Activated T-helper 1 cell treated with anti-CD3 and anti-CD28 coated beads, Interleukin-12 subunit alpha, Interleukin-12 subunit beta, Interleukin-2, Interleukin-4 antibody, amounts not matched to agents 30 ng/mL and 10 ng/mL and 1 ng/mL, durations not matched to agents 14 hours and 24 hours and 36 hours (primary cell): ENCODE measurements at regions of chr11 and their contacts with region 1.

Region 1: GRCh38 chr11:615504-616319 is at the start of gene IRF7:
- DNase-seq: peak; percentile 88
- H3K4me3 Mint-ChIP-seq: peak within 1 kb of the TSS; percentile 86
- H3K27ac Mint-ChIP-seq: peak within 1 kb of the TSS; percentile 85
- H3K4me1 Mint-ChIP-seq: peaks cover 7% of the 10 kb centered on the region
- H3K27me3 Mint-ChIP-seq: no peaks in the 10 kb centered on the region
- total RNA-seq, gene IRF7: 56.6 and 63.1 TPM in 2 replicates

Region 2: GRCh38 chr11:236774-237767 is 378.6 kb before region 1 on chr11 and contains the start of gene PSMD13:
- intact Hi-C with region 1: no loop called
- DNase-seq: peak; percentile 84
- H3K4me3 Mint-ChIP-seq: peak within 1 kb of the TSS; percentile 97
- H3K27ac Mint-ChIP-seq: peak within 1 kb of the TSS; percentile 98
- H3K4me1 Mint-ChIP-seq: peaks cover 46% of the 10 kb centered on the region
- H3K27me3 Mint-ChIP-seq: peaks cover 2% of the 10 kb centered on the region
- total RNA-seq, gene PSMD13: 261 and 266 TPM in 2 replicates

Region 3: DNA sequence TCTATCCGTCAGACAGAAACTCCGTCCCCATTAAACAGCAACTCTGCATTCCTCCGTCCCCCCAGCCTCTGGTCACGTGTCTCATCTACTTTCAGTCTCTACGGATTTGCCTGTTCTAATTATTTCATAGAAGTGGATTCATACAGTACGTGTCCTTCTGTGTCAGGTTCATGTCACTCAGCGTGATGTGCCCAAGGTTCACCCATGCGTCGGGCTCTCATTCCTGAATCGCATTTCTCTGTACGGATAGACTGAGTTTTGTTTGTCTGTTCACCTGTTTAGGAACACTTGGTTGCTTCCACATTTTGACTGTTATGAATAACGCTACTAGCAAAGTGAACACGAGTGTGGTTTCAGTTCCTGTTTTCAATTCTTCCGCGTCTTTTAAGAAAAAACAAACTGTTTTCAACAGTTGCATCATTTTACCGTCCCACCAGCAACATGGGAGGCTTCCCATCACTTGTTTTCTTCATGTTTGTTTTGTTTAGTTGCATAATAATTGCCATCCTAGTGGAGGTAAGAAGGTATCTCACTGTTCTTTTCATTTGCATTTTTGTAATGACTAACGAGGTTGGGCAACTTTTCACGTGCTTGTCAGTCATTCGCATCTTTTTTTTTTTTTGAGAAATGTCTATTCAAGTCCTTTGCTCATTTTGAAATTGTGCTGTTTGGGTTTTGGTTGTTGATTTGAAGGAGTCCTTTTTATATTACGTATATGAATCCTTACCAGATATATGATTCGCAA is 346.4 kb before region 1 on chr11:
- intact Hi-C with region 1: no loop called
- DNase-seq: peak; percentile 53
- H3K4me3 Mint-ChIP-seq: peak overlapping the region; percentile 88
- H3K27ac Mint-ChIP-seq: peak overlapping the region; percentile 97
- H3K4me1 Mint-ChIP-seq: peaks cover 31% of the 10 kb centered on the region
- H3K27me3 Mint-ChIP-seq: peaks cover 6% of the 10 kb centered on the region

Region 4: GRCh38 chr11:560305-561147 is 55.2 kb before region 1 on chr11 and contains the starts of genes LMNTD2 and RASSF7:
- intact Hi-C with region 1: loop called (anchors 1 kb)
- DNase-seq: peak; percentile 94
- H3K4me3 Mint-ChIP-seq: peak within 1 kb of the TSS; percentile 95
- H3K27ac Mint-ChIP-seq: peak within 1 kb of the TSS; percentile 71
- H3K4me1 Mint-ChIP-seq: peaks cover 11% of the 10 kb centered on the region
- H3K27me3 Mint-ChIP-seq: peaks cover 10% of the 10 kb centered on the region
- total RNA-seq, gene LMNTD2: 0.47 and 0.64 TPM in 2 replicates
- total RNA-seq, gene RASSF7: 15.9 and 19.8 TPM in 2 replicates

Region 5: DNA sequence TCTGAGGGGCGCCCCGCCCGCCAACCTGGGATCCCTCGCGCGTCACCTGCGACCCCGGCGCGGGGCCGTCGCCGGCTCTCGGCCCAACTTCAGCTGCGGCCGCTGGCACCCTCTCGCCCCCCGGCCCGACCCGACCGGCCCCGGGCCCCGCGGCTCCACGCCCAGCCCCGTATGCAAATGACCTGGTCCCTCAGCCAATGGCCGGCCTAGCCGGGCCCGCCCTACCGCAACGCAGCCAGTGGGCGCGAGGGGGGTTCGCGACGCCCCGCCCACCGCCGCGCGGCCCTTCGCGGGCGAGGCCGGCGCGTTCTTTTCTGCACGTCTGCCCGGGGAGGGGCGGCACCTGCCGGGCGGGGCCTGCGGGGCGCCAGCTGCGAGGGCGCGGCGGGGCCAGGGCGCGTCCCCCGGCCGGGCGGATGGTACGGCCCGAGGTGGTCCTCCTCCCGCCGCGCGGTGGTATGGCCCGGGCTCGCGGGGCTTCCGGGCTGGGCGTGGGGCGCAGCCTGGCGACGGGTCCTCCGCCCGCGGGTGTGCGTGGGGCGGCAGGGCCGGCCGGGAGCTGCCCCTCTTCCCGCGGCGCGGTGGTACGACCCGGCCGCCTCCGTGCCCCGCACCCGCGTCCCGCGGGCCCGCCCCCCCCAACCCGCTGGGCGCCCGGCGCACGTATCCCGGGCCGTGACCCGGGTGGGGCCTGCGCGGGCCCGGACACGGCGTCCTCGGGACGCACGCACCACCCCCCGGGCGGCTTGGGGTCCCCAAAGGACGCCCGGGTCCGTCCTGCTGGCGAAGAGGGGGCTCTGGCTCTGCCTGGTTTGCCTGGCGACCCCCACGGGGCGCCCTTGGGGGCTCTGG is 47.2 kb before region 1 on chr11:
- intact Hi-C with region 1: loop called (anchors 2 kb)
- DNase-seq: peak; percentile 97
- H3K4me3 Mint-ChIP-seq: peak overlapping the region; percentile 79
- H3K27ac Mint-ChIP-seq: no peak overlapping the region
- H3K4me1 Mint-ChIP-seq: peaks cover 15% of the 10 kb centered on the region
- H3K27me3 Mint-ChIP-seq: peaks cover 2% of the 10 kb centered on the region

Region 6: DNA sequence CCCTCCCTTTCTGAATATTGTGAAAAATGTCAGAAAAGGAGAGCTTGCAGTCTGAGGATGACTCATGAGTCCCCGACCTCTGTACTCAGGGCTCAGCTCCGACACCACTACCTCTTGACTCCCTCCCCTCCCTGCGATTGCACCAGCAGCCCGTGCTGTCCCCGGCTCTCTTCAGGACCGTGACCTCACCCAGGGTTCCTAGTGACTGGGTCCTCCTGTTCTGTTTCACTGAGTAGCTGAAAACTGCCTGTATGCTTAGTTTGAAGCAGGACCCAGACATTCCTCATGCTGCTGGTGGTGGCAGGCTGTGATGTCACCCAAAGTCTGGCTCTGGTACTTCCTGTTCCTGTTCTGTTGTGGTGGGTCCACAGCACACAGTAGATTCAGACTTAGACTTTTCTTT is 27.7 kb before region 1 on chr11:
- intact Hi-C with region 1: loop called (anchors 1 kb)
- DNase-seq: peak; percentile 60
- H3K4me3 Mint-ChIP-seq: peak overlapping the region; percentile 81
- H3K27ac Mint-ChIP-seq: peak overlapping the region; percentile 99
- H3K4me1 Mint-ChIP-seq: peaks cover 23% of the 10 kb centered on the region
- H3K27me3 Mint-ChIP-seq: no peaks in the 10 kb centered on the region

Region 7: DNA sequence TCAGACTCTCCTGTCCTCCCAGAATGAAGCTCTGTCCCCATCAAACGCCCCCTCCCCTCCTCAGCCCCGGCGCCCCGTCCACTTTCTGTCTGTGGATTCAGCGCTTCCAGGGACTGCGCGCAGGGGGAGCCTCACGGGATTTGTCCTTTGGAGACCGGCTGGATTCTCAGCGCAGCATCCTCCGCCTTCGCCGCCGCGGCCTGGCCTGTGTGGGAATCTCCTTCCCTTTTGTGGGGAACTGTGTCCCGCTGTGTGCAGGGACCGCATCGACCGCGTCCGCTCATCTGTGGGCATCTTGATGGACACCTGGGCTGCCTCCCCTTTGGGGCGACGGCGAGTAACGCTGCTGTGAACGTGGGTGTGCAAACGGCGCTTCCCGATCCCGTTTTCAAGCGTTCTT is 12.3 kb after region 1 on chr11:
- intact Hi-C with region 1: loop called (anchors 1 kb)
- DNase-seq: no peak
- H3K4me3 Mint-ChIP-seq: no peak overlapping the region
- H3K27ac Mint-ChIP-seq: peak overlapping the region; percentile 74
- H3K4me1 Mint-ChIP-seq: peaks cover 20% of the 10 kb centered on the region
- H3K27me3 Mint-ChIP-seq: peaks cover 20% of the 10 kb centered on the region

Region 8: DNA sequence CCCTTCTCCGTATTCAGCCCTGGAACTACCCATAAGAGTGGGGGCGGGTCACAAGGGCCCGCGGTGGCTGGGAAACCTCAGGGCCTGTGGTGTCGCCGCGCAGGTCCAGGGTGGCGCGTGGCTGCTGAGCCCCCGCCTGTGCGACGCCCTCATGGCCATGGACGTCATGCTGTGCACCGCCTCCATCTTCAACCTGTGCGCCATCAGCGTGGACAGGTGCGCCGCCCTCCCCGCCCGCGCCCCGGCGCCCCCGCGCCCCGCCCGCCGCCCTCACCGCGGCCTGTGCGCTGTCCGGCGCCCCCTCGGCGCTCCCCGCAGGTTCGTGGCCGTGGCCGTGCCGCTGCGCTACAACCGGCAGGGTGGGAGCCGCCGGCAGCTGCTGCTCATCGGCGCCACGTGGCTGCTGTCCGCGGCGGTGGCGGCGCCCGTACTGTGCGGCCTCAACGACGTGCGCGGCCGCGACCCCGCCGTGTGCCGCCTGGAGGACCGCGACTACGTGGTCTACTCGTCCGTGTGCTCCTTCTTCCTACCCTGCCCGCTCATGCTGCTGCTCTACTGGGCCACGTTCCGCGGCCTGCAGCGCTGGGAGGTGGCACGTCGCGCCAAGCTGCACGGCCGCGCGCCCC is 23.7 kb after region 1 on chr11:
- intact Hi-C with region 1: no loop called
- DNase-seq: no peak
- H3K4me3 Mint-ChIP-seq: no peak overlapping the region
- H3K27ac Mint-ChIP-seq: no peak overlapping the region
- H3K4me1 Mint-ChIP-seq: no peaks in the 10 kb centered on the region
- H3K27me3 Mint-ChIP-seq: peaks cover 19% of the 10 kb centered on the region

Region 9: GRCh38 chr11:765025-765801 is 149.5 kb after region 1 on chr11:
- intact Hi-C with region 1: no loop called
- DNase-seq: peak; percentile 45
- H3K4me3 Mint-ChIP-seq: no peak overlapping the region
- H3K27ac Mint-ChIP-seq: no peak overlapping the region
- H3K4me1 Mint-ChIP-seq: peaks cover 10% of the 10 kb centered on the region
- H3K27me3 Mint-ChIP-seq: no peaks in the 10 kb centered on the region